ENCODE measurements at regions of chr5 and their contacts with region 1.

Region 1: DNA sequence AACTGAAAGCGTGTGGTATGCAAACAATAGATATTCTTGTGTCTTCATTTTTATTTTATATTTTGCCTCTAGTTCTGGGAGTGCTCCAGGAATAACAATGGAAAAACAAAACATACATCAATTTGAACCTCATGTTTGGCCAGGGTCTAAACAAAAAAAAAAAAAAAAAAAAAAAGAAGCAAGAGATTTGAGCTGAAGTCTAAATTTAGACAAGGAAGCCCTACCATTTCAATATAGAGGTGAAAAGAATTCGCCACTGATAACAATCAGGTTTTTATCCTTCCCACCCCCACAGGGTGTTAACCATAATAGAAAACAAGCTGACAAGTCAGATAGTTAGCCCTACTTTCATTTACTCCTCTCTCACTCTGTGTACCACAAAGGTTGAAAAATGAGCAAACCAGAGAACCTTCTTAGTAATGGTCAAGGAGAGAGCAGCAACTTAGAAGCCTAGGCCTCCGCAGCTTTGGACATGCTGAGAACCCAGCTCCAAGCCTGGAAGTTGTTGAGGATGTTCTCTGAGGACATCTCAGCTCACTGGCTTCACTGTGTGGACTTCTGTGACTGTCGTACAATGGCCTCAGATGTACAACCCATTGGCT is 118.2 kb upstream of the HMHB1 start:
- DNase-seq: no peak

Region 2: GRCh38 chr5:143002459-143003328 is 691.1 kb before region 1 on chr5:
- intact Hi-C with region 1: loop called in 1 of 2 experiments (anchors 5 kb)
- DNase-seq: no peak

Measured in posterior vena cava (tissue), 2 donors.